Activated CD4-positive, alpha-beta T cell treated with anti-CD3 and anti-CD28 coated beads, Interleukin-2, amount 10 ng/mL, durations not matched to agents 24 days and 14 days (primary cell): ENCODE measurements at regions of chr6 and their contacts with region 1.

Region 1: DNA sequence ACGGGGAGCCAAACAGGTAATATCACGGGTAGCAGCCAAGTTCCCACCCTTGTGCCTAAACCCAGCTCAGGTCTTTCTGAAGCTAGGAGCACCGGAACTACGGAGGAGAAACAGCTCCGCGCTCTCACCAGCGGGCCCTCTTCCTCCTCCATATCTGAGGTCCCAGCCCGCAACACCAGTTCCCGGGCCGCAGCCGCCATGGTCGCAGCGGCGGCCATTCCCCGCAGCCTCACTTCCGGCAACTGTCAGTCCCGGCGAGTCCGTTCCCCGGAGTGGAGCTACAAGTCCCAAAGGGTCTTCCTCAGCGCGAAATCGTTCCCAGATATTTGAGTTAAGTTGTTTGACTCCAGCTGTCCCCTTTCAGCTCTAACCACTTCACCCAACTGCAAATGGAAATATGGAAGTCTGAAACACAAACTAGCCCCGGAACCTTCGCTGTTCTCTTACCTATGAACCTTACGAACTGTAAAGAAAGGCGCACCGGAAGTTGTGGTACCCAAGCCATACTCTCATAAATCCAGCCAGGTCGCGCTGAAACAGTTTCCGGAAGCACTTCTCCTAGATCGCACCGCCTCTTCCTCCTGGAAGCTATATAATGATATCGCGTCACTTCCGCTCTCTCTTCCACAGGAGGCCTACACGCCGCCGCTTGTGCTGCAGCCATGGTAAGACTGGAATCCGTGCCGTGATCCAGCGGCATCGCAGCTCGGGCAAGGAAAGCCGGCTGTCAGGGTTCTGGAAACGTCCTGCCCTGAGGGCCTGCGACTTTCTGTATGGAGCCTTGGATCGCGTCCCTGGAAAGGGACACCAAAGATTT is at the starts of genes RPS18 and VPS52:
- DNase-seq: peak; percentile 97
- H3K4me3 Mint-ChIP-seq: peak within 1 kb of the TSS; percentile 94
- H3K27ac Mint-ChIP-seq: peak within 1 kb of the TSS; percentile 98
- H3K4me1 Mint-ChIP-seq: peaks cover 54% of the 10 kb centered on the region
- H3K27me3 Mint-ChIP-seq: no peaks in the 10 kb centered on the region
- total RNA-seq, gene RPS18: 3,200 and 3,212 TPM in 2 replicates
- total RNA-seq, gene VPS52: 59.9 and 64.9 TPM in 2 replicates

Region 2: GRCh38 chr6:32843979-32844838 is 427.5 kb before region 1 on chr6 and contains the start of gene PSMB8:
- intact Hi-C with region 1: loop called (anchors 10 kb)
- DNase-seq: peak; percentile 99
- H3K4me3 Mint-ChIP-seq: peak within 1 kb of the TSS; percentile 99
- H3K27ac Mint-ChIP-seq: peak within 1 kb of the TSS; percentile 99
- H3K4me1 Mint-ChIP-seq: peaks cover 73% of the 10 kb centered on the region
- H3K27me3 Mint-ChIP-seq: no peaks in the 10 kb centered on the region
- total RNA-seq, gene PSMB8: 342 and 353 TPM in 2 replicates

Region 3: GRCh38 chr6:33288921-33289748 is 17.5 kb after region 1 on chr6 and contains the starts of genes PFDN6 and WDR46:
- intact Hi-C with region 1: loop called (anchors 1 kb)
- DNase-seq: peak; percentile 95
- H3K4me3 Mint-ChIP-seq: peak within 1 kb of the TSS; percentile 100
- H3K27ac Mint-ChIP-seq: peak within 1 kb of the TSS; percentile 95
- H3K4me1 Mint-ChIP-seq: peaks cover 28% of the 10 kb centered on the region
- H3K27me3 Mint-ChIP-seq: no peaks in the 10 kb centered on the region
- total RNA-seq, gene PFDN6: 114 and 132 TPM in 2 replicates
- total RNA-seq, gene WDR46: 106 and 120 TPM in 2 replicates

Region 4: GRCh38 chr6:33323623-33323948 is 51.9 kb after region 1 on chr6:
- intact Hi-C with region 1: loop called (anchors 1 kb)
- DNase-seq: no peak
- H3K4me3 Mint-ChIP-seq: peak overlapping the region; percentile 93
- H3K27ac Mint-ChIP-seq: peak overlapping the region; percentile 94
- H3K4me1 Mint-ChIP-seq: peaks cover 39% of the 10 kb centered on the region
- H3K27me3 Mint-ChIP-seq: no peaks in the 10 kb centered on the region